ENCODE measurements at regions of chr5 and their contacts with region 1.

Region 1: GRCh38 chr5:42994246-42995151 is 45.6 kb downstream of the ANXA2R start:
- DNase-seq: peak; percentile 88 to 96 (median 91)
- H3K4me3 ChIP-seq: peak overlapping the region in 3 of 4 donors; percentile 22 to 61 (median 30)
- H3K27ac ChIP-seq: peak overlapping the region; percentile 87 to 98 (median 94)
- H3K4me1 ChIP-seq: no peaks in the 10 kb centered on the region
- H3K27me3 ChIP-seq: no peaks in the 10 kb centered on the region
- CTCF ChIP-seq: peak; percentile 77 to 95 (median 90)
- POLR2A ChIP-seq: peak in 1 of 2 donors; percentile 33

Region 2: DNA sequence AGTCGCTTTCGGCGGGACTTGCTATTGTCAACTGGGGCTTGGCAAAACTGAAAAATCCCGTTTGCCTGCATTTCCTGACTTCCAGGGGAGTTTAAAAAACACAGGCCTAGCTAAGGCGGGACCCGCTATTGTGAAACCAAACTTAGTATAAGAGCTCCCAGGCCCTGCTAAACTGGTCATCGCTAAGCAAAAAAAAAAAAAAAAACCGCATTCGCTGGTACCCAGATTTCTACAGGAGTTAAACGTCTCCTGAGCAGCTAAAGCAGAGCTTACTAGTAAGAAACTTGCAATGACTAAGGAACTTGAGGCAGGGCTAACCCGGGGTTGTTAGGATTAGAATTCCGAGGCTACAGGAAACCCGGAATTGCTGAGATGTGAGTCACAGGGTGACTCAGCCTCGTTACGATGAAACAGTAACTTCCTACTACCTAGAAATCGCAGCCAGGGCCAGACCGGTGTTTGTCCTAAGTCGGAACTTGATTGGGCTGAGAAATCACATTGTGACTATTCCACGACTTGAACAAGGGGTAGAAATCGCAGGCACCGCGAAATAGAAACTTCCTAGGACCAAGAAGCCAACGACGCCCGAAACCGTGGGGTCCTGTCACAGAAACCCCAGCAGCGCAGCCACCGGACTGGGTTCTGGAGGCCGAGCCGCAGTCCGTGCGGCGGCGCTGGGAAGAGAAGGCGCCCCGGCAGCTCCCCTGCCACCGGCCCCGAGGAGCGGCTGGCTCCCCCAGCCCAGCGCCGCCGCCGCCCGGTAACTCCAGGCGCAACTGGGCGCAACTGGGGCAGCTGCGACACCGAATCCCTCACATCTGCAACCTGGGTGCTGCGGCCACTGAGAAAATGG is 43.8 kb before region 1 on chr5:
- intact Hi-C with region 1: loop called (anchors 2 to 5 kb)
- DNase-seq: peak; percentile 63 to 92 (median 85)
- H3K4me3 ChIP-seq: peak overlapping the region; percentile 49 to 90 (median 76)
- H3K27ac ChIP-seq: peak overlapping the region; percentile 82 to 93 (median 90)
- H3K4me1 ChIP-seq: peaks cover 0 to 20% of the 10 kb centered on the region in 2 donors
- H3K27me3 ChIP-seq: peaks cover 4% of the 10 kb centered on the region
- CTCF ChIP-seq: no peak
- POLR2A ChIP-seq: peak; percentile 39 to 72

Measured in adrenal gland (tissue), 19 donors.